Ascending aorta (tissue), 2 donors: ENCODE measurements at regions of chr1 and their contacts with region 1.

Region 1: GRCh38 chr1:112706908-112707663 is at the start of gene RHOC:
- DNase-seq: peak; percentile 62 to 94
- H3K4me3 ChIP-seq: peak within 1 kb of the TSS; percentile 93 to 99
- H3K27ac ChIP-seq: peak within 1 kb of the TSS; percentile 99
- H3K4me1 ChIP-seq: peaks cover 10 to 16% of the 10 kb centered on the region in 2 donors
- H3K27me3 ChIP-seq: no peaks in the 10 kb centered on the region
- CTCF ChIP-seq: peak; percentile 90 to 93 (median 92)
- total RNA-seq, gene RHOC: 379 TPM

Region 2: GRCh38 chr1:111990878-111991718 is 716.0 kb before region 1 on chr1:
- intact Hi-C with region 1: loop called (anchors 10 kb)
- DNase-seq: peak in 1 of 2 donors; percentile 85
- H3K4me3 ChIP-seq: peak overlapping the region; percentile 75 to 94
- H3K27ac ChIP-seq: peak overlapping the region; percentile 58 to 78
- H3K4me1 ChIP-seq: peaks cover 3 to 18% of the 10 kb centered on the region in 2 donors
- H3K27me3 ChIP-seq: no peaks in the 10 kb centered on the region
- CTCF ChIP-seq: peak; percentile 7 to 48 (median 32)

Region 3: DNA sequence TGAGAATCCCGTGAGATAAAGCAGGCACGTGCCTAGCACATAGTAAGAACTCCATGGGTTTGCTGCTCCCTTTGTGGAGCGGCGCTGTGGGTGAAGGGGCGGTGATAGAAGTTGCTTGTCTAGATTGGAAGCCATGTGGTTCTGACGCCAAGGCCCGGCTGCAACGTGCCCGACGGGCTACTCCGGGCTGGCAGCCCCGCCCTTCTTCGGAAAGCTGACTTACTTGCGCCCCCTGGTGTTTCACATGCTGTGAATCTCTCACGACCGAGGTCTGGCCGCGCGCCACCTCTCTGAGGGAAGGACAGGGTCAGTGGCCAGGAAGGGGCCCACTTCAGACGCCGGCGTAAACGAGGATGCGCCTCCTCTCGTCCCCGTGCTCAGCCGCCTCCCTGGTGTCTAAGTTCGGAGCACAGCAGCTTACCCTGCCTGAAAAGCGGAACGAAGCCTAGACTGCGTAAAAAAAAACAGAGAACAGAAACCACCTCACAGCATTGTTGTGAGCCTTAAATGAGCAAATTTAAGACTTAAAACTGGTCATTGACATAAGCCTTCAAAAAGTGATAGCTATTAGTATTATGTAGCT is 240.9 kb before region 1 on chr1:
- intact Hi-C with region 1: loop called (anchors 5 kb)
- DNase-seq: peak; percentile 77 to 98
- H3K4me3 ChIP-seq: peak overlapping the region; percentile 48 to 59
- H3K27ac ChIP-seq: peak overlapping the region; percentile 67 to 72
- H3K4me1 ChIP-seq: peaks cover 5 to 7% of the 10 kb centered on the region in 2 donors
- H3K27me3 ChIP-seq: no peaks in the 10 kb centered on the region
- CTCF ChIP-seq: peak; percentile 88 to 96 (median 89)

Region 4: DNA sequence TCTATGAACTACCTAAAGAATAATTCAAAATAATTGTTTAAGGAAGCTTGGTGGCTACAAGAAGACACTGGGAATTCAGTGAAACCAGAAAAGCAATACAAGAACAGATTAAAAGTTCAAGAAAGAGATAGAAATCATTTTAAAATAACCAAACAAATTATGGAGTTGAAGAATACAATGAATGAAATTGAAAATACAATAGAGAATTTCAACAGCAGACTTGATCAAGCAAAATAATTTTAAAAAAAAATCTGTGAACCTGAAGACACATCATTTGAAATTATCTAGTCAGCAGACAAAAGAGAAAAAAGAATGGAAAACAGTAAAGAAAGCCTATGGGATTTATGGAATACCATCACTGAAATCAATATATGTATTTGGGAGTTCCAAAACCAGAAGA is 229.5 kb before region 1 on chr1:
- intact Hi-C with region 1: no loop called
- DNase-seq: no peak
- H3K4me3 ChIP-seq: no peak overlapping the region
- H3K27ac ChIP-seq: no peak overlapping the region
- H3K4me1 ChIP-seq: no peaks in the 10 kb centered on the region
- H3K27me3 ChIP-seq: no peaks in the 10 kb centered on the region
- CTCF ChIP-seq: no peak

Region 5: GRCh38 chr1:112544011-112544688 is 162.9 kb before region 1 on chr1:
- intact Hi-C with region 1: loop called (anchors 5 kb)
- DNase-seq: no peak
- H3K4me3 ChIP-seq: no peak overlapping the region
- H3K27ac ChIP-seq: peak overlapping the region; percentile 79 to 86
- H3K4me1 ChIP-seq: peaks cover 0 to 18% of the 10 kb centered on the region in 2 donors
- H3K27me3 ChIP-seq: no peaks in the 10 kb centered on the region
- CTCF ChIP-seq: no peak

Region 6: GRCh38 chr1:112674439-112674985 is 32.6 kb before region 1 on chr1 and contains the start of gene MOV10:
- intact Hi-C with region 1: loop called (anchors 1 kb)
- DNase-seq: peak in 1 of 2 donors; percentile 84
- H3K4me3 ChIP-seq: peak within 1 kb of the TSS; percentile 90 to 99
- H3K27ac ChIP-seq: peak within 1 kb of the TSS; percentile 85 to 89
- H3K4me1 ChIP-seq: peaks cover 0 to 17% of the 10 kb centered on the region in 2 donors
- H3K27me3 ChIP-seq: no peaks in the 10 kb centered on the region
- CTCF ChIP-seq: no peak
- total RNA-seq, gene MOV10: 69.5 TPM

Region 7: DNA sequence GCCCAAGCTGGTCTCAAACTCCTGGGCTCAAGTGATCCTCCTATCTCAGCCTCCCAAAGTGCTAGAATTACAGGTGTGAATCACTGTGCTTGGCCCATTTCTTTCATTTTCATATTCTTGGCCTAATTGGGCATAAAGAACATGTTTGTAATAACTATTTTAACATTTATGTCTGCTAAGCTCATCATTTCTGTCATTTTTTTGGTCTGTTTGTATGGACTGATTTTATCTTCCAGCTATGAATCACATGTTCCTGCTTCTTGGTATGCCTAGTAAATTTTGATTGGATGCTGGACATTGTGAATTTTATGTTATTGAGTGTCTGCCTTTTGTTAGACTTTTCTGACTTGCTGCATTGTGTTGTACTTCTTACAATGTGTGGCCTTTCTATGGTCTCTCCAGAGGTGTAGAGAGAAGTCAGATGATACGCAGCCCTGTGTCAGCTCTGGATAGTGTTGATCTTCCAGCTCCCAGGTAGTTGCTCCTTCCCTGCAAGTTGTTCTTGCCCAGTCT is 47.1 kb after region 1 on chr1:
- intact Hi-C with region 1: no loop called
- DNase-seq: no peak
- H3K4me3 ChIP-seq: no peak overlapping the region
- H3K27ac ChIP-seq: no peak overlapping the region
- H3K4me1 ChIP-seq: no peaks in the 10 kb centered on the region
- H3K27me3 ChIP-seq: no peaks in the 10 kb centered on the region
- CTCF ChIP-seq: no peak

Region 8: DNA sequence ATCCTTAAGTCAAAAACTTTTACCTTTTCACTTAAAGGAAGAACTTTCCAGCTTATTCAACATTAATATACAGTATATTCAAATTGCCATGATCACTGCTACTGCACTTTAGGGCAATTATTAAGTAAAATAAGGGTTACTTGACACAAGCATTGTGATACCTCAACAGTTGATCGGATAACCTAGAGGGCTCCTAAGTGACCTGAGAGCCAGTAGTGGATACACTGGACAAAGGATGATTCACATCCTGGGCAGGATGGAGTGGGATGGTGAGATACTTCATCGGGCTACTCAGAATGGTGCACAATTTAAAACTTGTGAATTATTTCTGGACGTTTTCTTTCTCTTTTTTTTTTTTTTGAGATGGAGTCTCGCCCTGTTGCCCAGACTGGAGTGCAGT is 62.5 kb after region 1 on chr1:
- intact Hi-C with region 1: no loop called
- DNase-seq: no peak
- H3K4me3 ChIP-seq: no peak overlapping the region
- H3K27ac ChIP-seq: no peak overlapping the region
- H3K4me1 ChIP-seq: no peaks in the 10 kb centered on the region
- H3K27me3 ChIP-seq: no peaks in the 10 kb centered on the region
- CTCF ChIP-seq: no peak